T-cell (primary cell): ENCODE measurements at regions of chr12 and their contacts with region 1.

Region 1: GRCh38 chr12:126899926-126900792 is 1366.8 kb upstream of the TMEM132C start:
- DNase-seq: no peak
- ATAC-seq: no peak
- H3K4me3 ChIP-seq: no peak overlapping the region
- H3K4me3 Mint-ChIP-seq: no peak overlapping the region
- H3K27ac ChIP-seq: no peak overlapping the region
- H3K27ac Mint-ChIP-seq: no peak overlapping the region
- H3K4me1 ChIP-seq: no peaks in the 10 kb centered on the region
- H3K4me1 Mint-ChIP-seq: no peaks in the 10 kb centered on the region
- H3K27me3 ChIP-seq: no peaks in the 10 kb centered on the region
- H3K27me3 Mint-ChIP-seq: peaks cover 0 to 7% of the 10 kb centered on the region in 2 donors

Region 2: DNA sequence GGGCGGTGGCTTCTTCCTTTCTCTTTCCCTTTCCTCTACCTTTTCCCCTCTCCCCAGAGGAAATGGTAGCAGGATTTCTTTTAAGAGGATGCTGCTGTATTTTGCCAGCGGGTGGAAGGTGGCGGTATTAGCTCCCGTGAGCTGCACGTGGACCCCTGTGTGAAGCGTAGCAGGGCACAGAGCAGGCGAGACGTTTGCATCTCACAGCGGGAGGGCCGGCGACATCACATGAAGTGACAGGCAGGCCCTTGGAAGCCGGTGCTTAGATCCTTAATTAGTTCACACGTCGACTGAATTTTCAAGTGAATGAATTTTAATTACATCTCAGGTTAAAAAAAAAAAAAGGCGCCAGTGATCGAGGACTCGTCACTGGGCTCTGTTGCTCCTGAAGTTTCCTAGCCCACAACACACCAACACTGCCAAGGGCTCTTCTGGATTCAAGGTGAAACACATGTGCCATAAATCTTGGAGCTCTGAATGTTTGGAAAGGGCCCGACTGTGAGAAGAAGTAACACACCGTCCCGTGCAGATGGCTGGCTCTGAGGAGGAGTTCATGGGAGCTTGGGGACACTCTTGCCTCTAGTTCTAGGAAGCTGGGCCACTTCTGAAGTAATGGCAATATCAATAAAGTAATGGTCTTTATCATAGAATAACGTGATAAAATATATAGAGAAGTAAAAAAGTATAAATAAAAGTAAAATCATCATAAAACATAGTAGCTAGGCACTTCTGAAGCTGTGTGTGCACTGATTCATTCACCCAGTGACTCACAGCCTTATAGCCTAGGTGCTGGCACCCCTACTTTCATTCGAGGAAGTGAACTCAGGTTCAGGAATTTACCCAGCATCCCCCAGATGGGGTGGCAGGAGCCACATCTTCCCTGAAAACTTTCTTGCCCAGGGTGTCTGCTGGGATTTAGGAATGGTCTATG is 1759.6 kb before region 1 on chr12:
- CTCF ChIA-PET with region 1: no interaction called
- POLR2A ChIA-PET with region 1: interaction called in 1 of 2 experiments, 11 read pairs
- DNase-seq: no peak
- ATAC-seq: no peak
- H3K4me3 ChIP-seq: no peak overlapping the region
- H3K4me3 Mint-ChIP-seq: no peak overlapping the region
- H3K27ac ChIP-seq: no peak overlapping the region
- H3K27ac Mint-ChIP-seq: no peak overlapping the region
- H3K4me1 ChIP-seq: no peaks in the 10 kb centered on the region
- H3K4me1 Mint-ChIP-seq: no peaks in the 10 kb centered on the region
- H3K27me3 ChIP-seq: no peaks in the 10 kb centered on the region
- H3K27me3 Mint-ChIP-seq: no peaks in the 10 kb centered on the region

Region 3: DNA sequence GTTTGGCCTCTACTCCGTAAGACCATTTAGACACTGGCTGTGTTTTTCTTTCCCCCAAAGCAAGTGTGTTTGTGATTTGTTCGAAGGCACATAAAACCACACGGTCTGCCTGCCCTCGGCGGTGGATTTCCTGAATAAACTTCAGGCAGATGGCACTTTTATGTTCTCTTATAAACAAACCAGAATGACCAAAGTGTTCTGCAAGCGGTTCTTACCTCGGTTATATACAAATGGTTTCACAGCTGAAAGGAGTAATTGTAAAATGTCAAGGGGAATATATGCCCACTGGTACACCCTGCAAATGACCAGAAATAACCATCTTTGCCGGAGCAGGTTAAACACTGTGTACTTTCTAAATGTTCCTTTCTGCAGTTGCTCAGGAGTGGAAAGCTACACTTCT is 109.0 kb before region 1 on chr12:
- CTCF ChIA-PET with region 1: no interaction called
- POLR2A ChIA-PET with region 1: no interaction called
- DNase-seq: no peak
- ATAC-seq: no peak
- H3K4me3 ChIP-seq: no peak overlapping the region
- H3K4me3 Mint-ChIP-seq: no peak overlapping the region
- H3K27ac ChIP-seq: no peak overlapping the region
- H3K27ac Mint-ChIP-seq: no peak overlapping the region
- H3K4me1 ChIP-seq: no peaks in the 10 kb centered on the region
- H3K4me1 Mint-ChIP-seq: no peaks in the 10 kb centered on the region
- H3K27me3 ChIP-seq: no peaks in the 10 kb centered on the region
- H3K27me3 Mint-ChIP-seq: no peaks in the 10 kb centered on the region

Region 4: GRCh38 chr12:126869644-126870043 is 30.5 kb before region 1 on chr12:
- CTCF ChIA-PET with region 1: no interaction called
- POLR2A ChIA-PET with region 1: no interaction called
- DNase-seq: no peak
- ATAC-seq: no peak
- H3K4me3 ChIP-seq: no peak overlapping the region
- H3K4me3 Mint-ChIP-seq: no peak overlapping the region
- H3K27ac ChIP-seq: no peak overlapping the region
- H3K27ac Mint-ChIP-seq: no peak overlapping the region
- H3K4me1 ChIP-seq: peaks cover 0 to 5% of the 10 kb centered on the region in 2 experiments
- H3K4me1 Mint-ChIP-seq: peaks cover 0 to 4% (median 0%) of the 10 kb centered on the region in 3 donors
- H3K27me3 ChIP-seq: peaks cover 0 to 5% of the 10 kb centered on the region in 2 experiments
- H3K27me3 Mint-ChIP-seq: peaks cover 0 to 4% of the 10 kb centered on the region in 2 donors

Region 5: DNA sequence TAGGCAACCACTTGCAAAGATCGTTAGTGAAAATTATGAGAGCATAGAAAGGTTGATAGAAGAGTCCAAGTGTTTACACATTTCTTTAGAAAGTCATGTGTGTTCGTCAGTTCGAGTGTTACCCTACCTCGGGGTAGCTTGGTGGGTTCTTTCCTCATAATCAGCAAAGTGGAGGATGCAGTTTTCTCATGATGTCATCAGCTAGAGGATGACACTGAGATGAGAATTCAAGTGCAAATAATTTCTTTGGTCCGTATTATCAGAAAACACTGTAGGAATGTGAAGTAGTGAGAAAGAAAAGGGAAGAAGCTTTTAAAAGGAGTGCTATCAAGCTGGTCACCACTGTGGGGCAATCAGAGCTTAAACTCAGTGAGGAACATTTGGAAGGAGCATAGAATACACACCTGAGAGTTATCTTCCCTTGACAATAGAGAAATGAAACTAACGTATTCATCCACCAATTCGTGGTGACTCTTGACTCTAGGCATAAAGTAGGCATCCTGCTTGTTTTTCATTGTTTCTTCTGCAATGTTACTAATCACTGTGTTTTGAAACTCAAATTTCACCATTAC is 25.9 kb after region 1 on chr12:
- CTCF ChIA-PET with region 1: no interaction called
- POLR2A ChIA-PET with region 1: no interaction called
- DNase-seq: no peak
- ATAC-seq: no peak
- H3K4me3 ChIP-seq: no peak overlapping the region
- H3K4me3 Mint-ChIP-seq: no peak overlapping the region
- H3K27ac ChIP-seq: no peak overlapping the region
- H3K27ac Mint-ChIP-seq: no peak overlapping the region
- H3K4me1 ChIP-seq: no peaks in the 10 kb centered on the region
- H3K4me1 Mint-ChIP-seq: no peaks in the 10 kb centered on the region
- H3K27me3 ChIP-seq: no peaks in the 10 kb centered on the region
- H3K27me3 Mint-ChIP-seq: no peaks in the 10 kb centered on the region

Region 6: GRCh38 chr12:127690161-127690560 is 790.0 kb after region 1 on chr12:
- CTCF ChIA-PET with region 1: no interaction called
- POLR2A ChIA-PET with region 1: no interaction called
- DNase-seq: no peak
- ATAC-seq: no peak
- H3K4me3 ChIP-seq: no peak overlapping the region
- H3K4me3 Mint-ChIP-seq: no peak overlapping the region
- H3K27ac ChIP-seq: no peak overlapping the region
- H3K27ac Mint-ChIP-seq: no peak overlapping the region
- H3K4me1 ChIP-seq: no peaks in the 10 kb centered on the region
- H3K4me1 Mint-ChIP-seq: no peaks in the 10 kb centered on the region
- H3K27me3 ChIP-seq: no peaks in the 10 kb centered on the region
- H3K27me3 Mint-ChIP-seq: no peaks in the 10 kb centered on the region